ENCODE measurements at regions of chr18 and their contacts with region 1.

Region 1: GRCh38 chr18:31497837-31498573 is at the start of gene DSG2:
- DNase-seq: no peak
- ATAC-seq: peak; percentile 82
- H3K4me3 ChIP-seq: peak within 1 kb of the TSS; percentile 88
- H3K27ac ChIP-seq: peak within 1 kb of the TSS; percentile 79
- H3K4me1 ChIP-seq: peaks cover 6% of the 10 kb centered on the region
- H3K27me3 ChIP-seq: no peaks in the 10 kb centered on the region
- CTCF ChIP-seq: no peak
- EP300 ChIP-seq: no peak
- POLR2A ChIP-seq: peak; percentile 89
- RAD21 ChIP-seq: no peak
- polyA plus RNA-seq, gene DSG2: 11.7 to 12.7 TPM

Region 2: GRCh38 chr18:31230495-31230894 is 267.5 kb before region 1 on chr18:
- CTCF ChIA-PET with region 1: no interaction called
- POLR2A ChIA-PET with region 1: no interaction called
- RAD21 ChIA-PET with region 1: no interaction called
- SMC1A ChIA-PET with region 1: no interaction called
- in situ Hi-C with region 1: no loop called
- intact Hi-C with region 1: loop called (anchors 10 kb)
- DNase-seq: peak; percentile 52
- ATAC-seq: peak; percentile 91
- H3K4me3 ChIP-seq: no peak overlapping the region
- H3K27ac ChIP-seq: peak overlapping the region; percentile 72
- H3K4me1 ChIP-seq: peaks cover 24% of the 10 kb centered on the region
- H3K27me3 ChIP-seq: no peaks in the 10 kb centered on the region
- CTCF ChIP-seq: no peak
- EP300 ChIP-seq: peak; percentile 35 to 77; a peak in 2 of 4 replicates
- POLR2A ChIP-seq: no peak
- RAD21 ChIP-seq: peak; percentile 10; the same call in 1 of the 2 replicates

Region 3: GRCh38 chr18:31267823-31268481 is 230.1 kb before region 1 on chr18:
- CTCF ChIA-PET with region 1: no interaction called
- POLR2A ChIA-PET with region 1: interaction called, 3 read pairs
- RAD21 ChIA-PET with region 1: no interaction called
- SMC1A ChIA-PET with region 1: interaction called, 4 read pairs
- in situ Hi-C with region 1: no loop called
- intact Hi-C with region 1: loop called (anchors 5 kb)
- DNase-seq: peak; percentile 44
- ATAC-seq: peak; percentile 89
- H3K4me3 ChIP-seq: no peak overlapping the region
- H3K27ac ChIP-seq: peak overlapping the region; percentile 60
- H3K4me1 ChIP-seq: peaks cover 6% of the 10 kb centered on the region
- H3K27me3 ChIP-seq: no peaks in the 10 kb centered on the region
- CTCF ChIP-seq: no peak
- EP300 ChIP-seq: peak; percentile 54 to 64; a peak in 2 of 4 replicates
- POLR2A ChIP-seq: no peak
- RAD21 ChIP-seq: no peak

Region 4: GRCh38 chr18:31429621-31430020 is 68.4 kb before region 1 on chr18:
- CTCF ChIA-PET with region 1: interaction called, 10 read pairs
- POLR2A ChIA-PET with region 1: interaction called, 3 read pairs
- RAD21 ChIA-PET with region 1: interaction called, 16 read pairs
- SMC1A ChIA-PET with region 1: interaction called, 18 read pairs
- in situ Hi-C with region 1: no loop called
- intact Hi-C with region 1: loop called (anchors 2 kb)
- DNase-seq: no peak
- ATAC-seq: no peak
- H3K4me3 ChIP-seq: no peak overlapping the region
- H3K27ac ChIP-seq: no peak overlapping the region
- H3K4me1 ChIP-seq: no peaks in the 10 kb centered on the region
- H3K27me3 ChIP-seq: no peaks in the 10 kb centered on the region
- CTCF ChIP-seq: no peak
- EP300 ChIP-seq: no peak
- POLR2A ChIP-seq: no peak
- RAD21 ChIP-seq: no peak

Region 5: GRCh38 chr18:31512203-31512764 is 14.3 kb after region 1 on chr18:
- CTCF ChIA-PET with region 1: interaction called, 12 read pairs
- POLR2A ChIA-PET with region 1: interaction called, 9 read pairs
- RAD21 ChIA-PET with region 1: interaction called, 16 read pairs
- SMC1A ChIA-PET with region 1: interaction called, 21 read pairs
- in situ Hi-C with region 1: no loop called
- intact Hi-C with region 1: no loop called
- DNase-seq: no peak
- ATAC-seq: no peak; the same call in 2 of the 3 replicates
- H3K4me3 ChIP-seq: no peak overlapping the region
- H3K27ac ChIP-seq: no peak overlapping the region
- H3K4me1 ChIP-seq: peaks cover 13% of the 10 kb centered on the region
- H3K27me3 ChIP-seq: no peaks in the 10 kb centered on the region
- CTCF ChIP-seq: no peak
- EP300 ChIP-seq: no peak
- POLR2A ChIP-seq: no peak
- RAD21 ChIP-seq: no peak

Region 6: GRCh38 chr18:31648966-31649429 is 151.0 kb after region 1 on chr18:
- CTCF ChIA-PET with region 1: interaction called, 4 read pairs
- POLR2A ChIA-PET with region 1: interaction called, 4 read pairs
- RAD21 ChIA-PET with region 1: interaction called, 8 read pairs
- SMC1A ChIA-PET with region 1: interaction called, 10 read pairs
- in situ Hi-C with region 1: no loop called
- intact Hi-C with region 1: no loop called
- DNase-seq: peak; percentile 85
- ATAC-seq: peak; percentile 77
- H3K4me3 ChIP-seq: peak overlapping the region; percentile 25; the same call in 1 of the 2 replicates
- H3K27ac ChIP-seq: peak overlapping the region; percentile 88
- H3K4me1 ChIP-seq: peaks cover 70% of the 10 kb centered on the region
- H3K27me3 ChIP-seq: no peaks in the 10 kb centered on the region
- CTCF ChIP-seq: no peak
- EP300 ChIP-seq: peak; percentile 65 to 85; a peak in 2 of 4 replicates
- POLR2A ChIP-seq: 0 out of 2 replicates have a peak, but pooled peaks have one; percentile 31
- RAD21 ChIP-seq: peak; percentile 1; the same call in 1 of the 2 replicates